ENCODE measurements at regions of chr1 and their contacts with region 1.

Region 1: DNA sequence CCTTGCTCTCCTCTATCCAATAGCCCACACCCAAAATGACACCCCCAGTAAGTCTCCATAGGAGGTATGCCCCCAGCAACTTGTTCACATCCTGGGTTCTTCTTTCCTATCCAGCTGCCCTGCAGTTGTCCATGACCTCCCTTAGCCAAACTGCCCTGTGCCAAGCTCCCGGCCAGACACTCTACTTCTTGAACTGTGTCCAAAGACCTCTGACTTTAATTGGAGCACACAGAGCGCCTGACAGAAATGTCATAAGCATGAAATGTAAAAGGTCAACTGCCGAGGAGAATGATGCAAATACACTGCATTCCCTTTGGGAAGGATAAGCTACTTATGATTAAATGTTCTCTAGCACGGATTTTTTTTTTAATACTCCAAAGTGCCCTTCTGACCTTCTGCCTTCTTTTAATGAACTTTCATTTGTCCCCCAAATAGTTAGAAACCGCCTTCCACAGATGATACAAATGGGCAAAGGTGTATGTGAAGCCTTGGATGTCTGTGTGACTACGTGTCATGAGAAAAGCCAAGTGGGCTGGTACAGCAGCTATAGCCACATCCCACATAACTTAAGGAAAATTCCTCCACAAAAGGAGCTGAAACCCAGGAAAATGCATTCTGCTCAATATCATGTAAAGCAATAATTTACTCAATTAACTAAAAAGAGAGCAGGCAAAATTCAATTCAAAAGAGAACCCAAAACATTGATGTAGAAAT is 26.7 kb downstream of the PALMD start:
- DNase-seq: no peak
- H3K4me3 ChIP-seq: no peak overlapping the region
- H3K27ac ChIP-seq: no peak overlapping the region
- H3K27me3 ChIP-seq: no peaks in the 10 kb centered on the region
- CTCF ChIP-seq: no peak

Region 2: GRCh38 chr1:99580451-99580850 is 92.2 kb before region 1 on chr1:
- CTCF ChIA-PET with region 1: no interaction called
- POLR2A ChIA-PET with region 1: no interaction called
- DNase-seq: no peak
- H3K4me3 ChIP-seq: no peak overlapping the region
- H3K27ac ChIP-seq: no peak overlapping the region
- H3K27me3 ChIP-seq: no peaks in the 10 kb centered on the region
- CTCF ChIP-seq: no peak

Region 3: DNA sequence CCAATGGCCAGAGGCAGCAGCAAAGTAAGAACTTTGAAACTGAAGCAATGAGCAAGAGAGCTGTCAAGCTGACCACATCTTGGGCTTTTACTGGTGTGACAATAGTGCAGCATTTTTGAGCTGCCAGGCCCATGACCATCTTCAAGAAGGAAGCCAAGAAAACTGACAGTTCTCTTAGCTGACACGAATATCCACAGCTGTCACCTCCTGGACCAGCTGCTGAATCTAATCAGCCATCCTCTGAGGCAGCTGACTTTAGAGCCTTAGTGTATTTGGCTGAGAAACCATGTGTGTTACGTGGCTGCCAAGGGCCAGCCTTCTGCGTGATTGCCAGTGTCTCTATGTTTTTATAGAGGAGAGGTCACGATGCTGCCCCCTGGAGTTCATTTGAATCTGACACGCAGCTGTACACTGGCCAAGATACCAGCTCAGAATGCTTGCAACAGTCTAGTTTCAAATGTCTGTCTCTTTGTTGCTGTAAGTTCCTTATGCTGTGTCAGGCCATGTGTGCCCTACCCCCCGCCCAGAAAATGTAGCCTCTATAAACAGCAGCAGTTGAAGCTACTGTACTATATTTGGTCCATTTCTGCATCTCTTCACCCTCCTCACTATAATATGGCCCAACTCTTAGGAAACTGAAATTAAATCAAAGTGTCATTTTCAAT is 13.0 kb after region 1 on chr1:
- CTCF ChIA-PET with region 1: interaction called, 19 read pairs
- POLR2A ChIA-PET with region 1: no interaction called
- DNase-seq: peak; percentile 68
- H3K4me3 ChIP-seq: no peak overlapping the region
- H3K27ac ChIP-seq: peak overlapping the region; percentile 55
- H3K27me3 ChIP-seq: no peaks in the 10 kb centered on the region
- CTCF ChIP-seq: peak; percentile 61